ENCODE measurements at regions of chr22 and their contacts with region 1.

Region 1: DNA sequence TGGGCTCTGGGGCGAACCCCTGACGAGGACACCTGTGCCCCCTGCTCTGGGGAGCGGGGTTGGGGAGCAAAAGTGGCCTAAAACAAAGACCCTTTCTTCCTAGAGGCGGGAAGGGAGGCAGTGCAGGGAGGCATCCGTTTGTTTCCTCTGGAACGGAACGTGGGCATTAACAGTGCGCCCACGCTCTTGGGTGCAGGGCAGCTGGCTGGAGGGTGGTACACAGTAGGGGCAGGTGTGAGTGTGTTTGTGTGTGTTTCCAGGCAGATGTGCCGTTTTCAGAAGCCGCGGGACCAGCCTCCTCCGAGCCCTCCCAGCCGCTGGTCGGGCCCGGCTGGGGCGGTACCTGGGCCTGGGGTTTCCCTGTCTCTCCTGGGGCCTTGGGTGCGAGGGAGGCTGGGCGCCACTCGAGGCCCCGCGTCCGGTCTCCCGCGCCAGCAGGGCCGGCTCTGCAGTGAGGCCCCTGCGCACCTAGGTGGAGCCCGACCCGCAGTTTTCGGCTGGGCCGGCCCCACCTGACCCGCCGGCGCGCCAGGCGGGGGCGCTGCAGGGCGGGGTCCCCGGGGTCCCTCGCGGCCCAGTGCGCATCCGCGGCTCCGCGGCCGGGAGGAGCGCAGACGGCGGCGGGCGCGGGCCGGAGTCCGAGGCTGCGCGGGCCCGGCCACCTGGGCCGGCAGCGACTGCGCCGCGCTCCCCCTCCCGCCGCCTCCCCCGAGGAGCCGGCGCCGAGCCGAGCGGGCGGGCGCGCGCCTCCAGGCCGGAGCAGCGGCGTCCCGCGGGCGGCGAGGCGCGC is 1252.7 kb downstream of the BRD1 start:
- DNase-seq: peak in 1 of 2 donors; percentile 64
- ATAC-seq: peak; percentile 44
- H3K4me3 ChIP-seq: peak overlapping the region; percentile 41 to 79
- H3K27ac ChIP-seq: peak overlapping the region in 1 of 2 donors; percentile 6
- H3K4me1 ChIP-seq: no peaks in the 10 kb centered on the region
- H3K27me3 ChIP-seq: no peaks in the 10 kb centered on the region

Region 2: GRCh38 chr22:48618326-48618725 is 43.4 kb after region 1 on chr22:
- intact Hi-C with region 1: no loop called
- DNase-seq: no peak
- ATAC-seq: no peak
- H3K4me3 ChIP-seq: no peak overlapping the region
- H3K27ac ChIP-seq: no peak overlapping the region
- H3K4me1 ChIP-seq: no peaks in the 10 kb centered on the region
- H3K27me3 ChIP-seq: no peaks in the 10 kb centered on the region

Region 3: DNA sequence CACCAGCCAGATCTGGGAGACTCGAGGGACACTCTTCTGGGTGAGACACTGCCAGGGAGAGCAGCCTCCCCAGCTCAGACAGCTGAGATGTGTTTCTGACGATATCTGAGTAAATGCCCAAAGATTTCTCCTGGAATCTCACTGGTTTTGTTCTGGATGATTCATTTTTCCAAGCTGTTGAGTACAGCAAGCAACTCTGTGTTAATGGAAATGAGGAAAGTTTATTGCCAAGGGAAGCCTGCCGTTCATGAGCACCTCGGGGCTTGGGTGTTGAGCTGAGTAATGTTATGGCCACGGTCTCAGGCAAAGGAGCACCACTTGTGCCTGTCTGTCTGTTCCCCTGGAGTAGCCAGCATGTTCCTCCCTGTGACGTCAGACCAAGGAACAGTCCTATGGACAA is 120.3 kb after region 1 on chr22:
- intact Hi-C with region 1: no loop called
- DNase-seq: no peak
- ATAC-seq: no peak
- H3K4me3 ChIP-seq: no peak overlapping the region
- H3K27ac ChIP-seq: no peak overlapping the region
- H3K4me1 ChIP-seq: no peaks in the 10 kb centered on the region
- H3K27me3 ChIP-seq: no peaks in the 10 kb centered on the region

Region 4: DNA sequence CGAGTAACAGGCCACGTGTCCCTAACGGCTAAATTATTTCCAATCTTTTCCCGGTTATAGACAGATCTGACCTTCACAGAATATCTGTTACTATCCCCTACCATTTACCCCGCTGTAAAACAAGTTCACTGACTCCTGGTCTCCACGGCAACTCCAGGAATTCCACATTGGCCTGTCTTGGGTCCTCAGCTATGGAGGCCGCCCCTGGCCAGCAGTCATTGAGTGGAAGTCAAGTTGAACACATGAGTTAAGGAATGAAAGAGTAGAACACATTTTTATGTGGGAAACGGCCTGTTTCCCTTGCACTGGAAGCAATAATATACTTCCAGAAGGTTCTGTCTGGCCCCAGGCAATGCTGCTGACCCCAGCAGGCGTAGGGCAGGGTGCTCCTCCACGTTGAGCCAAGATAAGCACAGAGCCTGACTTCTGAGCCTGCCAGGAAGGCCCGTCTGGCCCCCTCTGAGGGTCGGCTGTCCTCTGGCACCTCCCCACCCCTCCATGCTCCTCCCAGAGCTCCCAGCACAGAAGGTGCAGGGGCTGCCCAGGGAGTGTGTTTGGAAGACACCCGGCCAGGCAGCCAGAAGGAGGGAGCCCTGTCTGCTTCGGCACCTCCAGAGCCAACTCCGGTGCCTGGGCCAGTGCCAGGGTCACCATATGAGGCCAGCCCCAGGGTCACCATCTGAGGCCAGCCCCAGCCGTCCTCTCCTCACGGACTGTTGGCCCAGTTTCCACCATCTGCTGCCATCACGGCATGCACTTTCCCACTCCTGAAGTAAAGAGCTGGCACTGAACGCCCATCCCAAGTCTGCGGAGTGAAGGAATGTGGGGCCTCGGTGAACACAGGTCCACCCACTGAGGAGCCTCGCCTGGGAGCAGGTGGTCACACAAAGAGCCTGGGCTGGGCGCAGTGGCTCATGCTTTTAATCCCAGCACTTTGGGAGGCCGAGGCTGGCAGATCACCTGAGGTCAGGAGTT is 439.5 kb after region 1 on chr22:
- intact Hi-C with region 1: loop called in 1 of 2 experiments (anchors 5 kb)
- DNase-seq: peak; percentile 61 to 64
- ATAC-seq: peak; percentile 37
- H3K4me3 ChIP-seq: no peak overlapping the region
- H3K27ac ChIP-seq: peak overlapping the region; percentile 10 to 78
- H3K4me1 ChIP-seq: no peaks in the 10 kb centered on the region
- H3K27me3 ChIP-seq: no peaks in the 10 kb centered on the region

Measured in aorta (tissue), 5 donors.